ENCODE measurements at regions of chr6 and their contacts with region 1.

Region 1: DNA sequence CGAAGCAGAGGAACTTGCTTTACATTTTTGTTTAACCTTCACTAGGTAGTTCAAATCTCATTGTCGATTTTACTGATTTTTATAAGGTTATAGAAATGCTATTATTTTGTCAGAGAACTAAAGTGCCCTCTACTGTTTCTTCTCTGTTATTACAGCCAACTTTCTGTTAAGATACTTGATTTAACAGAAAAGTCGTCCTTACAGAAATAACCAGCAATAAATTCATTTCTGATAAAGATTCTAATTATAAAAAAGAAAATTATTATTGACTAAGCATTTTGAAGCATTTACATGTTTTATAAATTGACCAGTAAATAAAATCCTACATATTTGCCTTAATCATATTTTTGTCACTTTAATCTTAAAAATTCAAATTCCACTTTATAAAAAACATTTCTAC is 60.8 kb downstream of the OGFRL1 start:
- DNase-seq: no peak
- H3K4me3 ChIP-seq: no peak overlapping the region
- H3K27ac ChIP-seq: no peak overlapping the region
- H3K4me1 ChIP-seq: peaks cover 0 to 24% (median 4%) of the 10 kb centered on the region in 6 donors
- H3K27me3 ChIP-seq: no peaks in the 10 kb centered on the region
- CTCF ChIP-seq: peak; percentile 22 to 78 (median 68)
- POLR2A ChIP-seq: no peak

Region 2: GRCh38 chr6:71190809-71191208 is 158.6 kb before region 1 on chr6:
- intact Hi-C with region 1: loop called (anchors 5 kb)
- DNase-seq: no peak
- H3K4me3 ChIP-seq: no peak overlapping the region
- H3K27ac ChIP-seq: no peak overlapping the region
- H3K4me1 ChIP-seq: peaks cover 0 to 3% (median 0%) of the 10 kb centered on the region in 6 donors
- H3K27me3 ChIP-seq: no peaks in the 10 kb centered on the region
- CTCF ChIP-seq: peak in 7 of 11 experiments; percentile 29 to 55 (median 40)
- POLR2A ChIP-seq: no peak

Region 3: GRCh38 chr6:71277926-71278600 is 71.3 kb before region 1 on chr6:
- intact Hi-C with region 1: no loop called
- DNase-seq: no peak
- H3K4me3 ChIP-seq: no peak overlapping the region
- H3K27ac ChIP-seq: no peak overlapping the region
- H3K4me1 ChIP-seq: no peaks in the 10 kb centered on the region
- H3K27me3 ChIP-seq: no peaks in the 10 kb centered on the region
- CTCF ChIP-seq: no peak
- POLR2A ChIP-seq: no peak